GM12878 (cell line): ENCODE measurements at regions of chr17 and their contacts with region 1.

Region 1: DNA sequence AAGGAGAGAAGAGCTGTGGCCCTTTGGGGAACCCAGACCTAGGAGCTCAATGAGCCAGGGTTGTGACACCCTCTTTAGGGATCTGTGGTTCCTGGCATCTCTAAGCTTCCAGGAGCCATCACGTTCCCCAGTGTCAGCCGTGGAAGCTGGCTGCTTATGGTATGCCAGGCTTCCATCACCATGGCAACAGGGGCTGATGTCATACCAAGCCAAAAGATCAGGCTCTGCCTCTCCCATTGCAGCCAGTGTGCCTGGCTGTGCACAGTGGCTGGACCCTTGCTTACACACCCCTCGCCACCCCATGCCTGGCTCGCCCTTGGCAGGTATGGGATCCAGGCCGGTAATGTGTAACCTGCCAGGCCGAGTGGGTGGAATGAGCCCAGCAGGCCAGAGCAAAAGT is 91.1 kb downstream of the SSH2 start:
- DNase-seq: no peak
- ATAC-seq: no peak
- H3K4me3 ChIP-seq: no peak overlapping the region
- H3K27ac ChIP-seq: no peak overlapping the region
- H3K4me1 ChIP-seq: no peaks in the 10 kb centered on the region
- H3K27me3 ChIP-seq: no peaks in the 10 kb centered on the region
- CTCF ChIP-seq: no peak
- EP300 ChIP-seq: no peak
- POLR2A ChIP-seq: no peak
- RAD21 ChIP-seq: no peak

Region 2: DNA sequence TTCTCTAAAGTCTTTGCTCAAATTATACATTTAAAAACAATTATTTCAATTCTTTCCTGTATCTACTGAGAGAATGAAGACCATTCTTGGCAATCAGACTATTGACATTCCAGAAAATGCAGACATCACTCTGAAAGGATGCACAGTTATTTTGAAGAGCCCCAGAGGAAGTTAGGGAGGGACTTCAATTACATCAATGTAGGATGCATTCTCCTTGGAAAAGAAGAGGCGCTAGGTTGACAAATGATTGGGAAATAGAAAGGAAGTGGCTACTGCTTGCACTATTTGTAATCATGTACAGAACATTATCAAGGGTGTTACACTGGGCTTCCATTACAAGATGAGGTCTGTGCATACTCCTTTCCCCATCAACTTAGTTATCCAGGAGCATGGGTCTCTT is 16.7 kb after region 1 on chr17:
- CTCF ChIA-PET with region 1: interaction called, 3 read pairs
- POLR2A ChIA-PET with region 1: no interaction called
- RAD21 ChIA-PET with region 1: no interaction called
- SMC1A ChIA-PET with region 1: interaction called, 11 read pairs
- in situ Hi-C with region 1: no loop called
- intact Hi-C with region 1: no loop called
- DNase-seq: no peak
- ATAC-seq: no peak
- H3K4me3 ChIP-seq: no peak overlapping the region
- H3K27ac ChIP-seq: no peak overlapping the region
- H3K4me1 ChIP-seq: no peaks in the 10 kb centered on the region; the same call in 1 of the 2 replicates
- H3K27me3 ChIP-seq: no peaks in the 10 kb centered on the region
- CTCF ChIP-seq: no peak
- EP300 ChIP-seq: no peak
- POLR2A ChIP-seq: no peak
- RAD21 ChIP-seq: no peak